ENCODE measurements at regions of chr17 and their contacts with region 1.

Region 1: DNA sequence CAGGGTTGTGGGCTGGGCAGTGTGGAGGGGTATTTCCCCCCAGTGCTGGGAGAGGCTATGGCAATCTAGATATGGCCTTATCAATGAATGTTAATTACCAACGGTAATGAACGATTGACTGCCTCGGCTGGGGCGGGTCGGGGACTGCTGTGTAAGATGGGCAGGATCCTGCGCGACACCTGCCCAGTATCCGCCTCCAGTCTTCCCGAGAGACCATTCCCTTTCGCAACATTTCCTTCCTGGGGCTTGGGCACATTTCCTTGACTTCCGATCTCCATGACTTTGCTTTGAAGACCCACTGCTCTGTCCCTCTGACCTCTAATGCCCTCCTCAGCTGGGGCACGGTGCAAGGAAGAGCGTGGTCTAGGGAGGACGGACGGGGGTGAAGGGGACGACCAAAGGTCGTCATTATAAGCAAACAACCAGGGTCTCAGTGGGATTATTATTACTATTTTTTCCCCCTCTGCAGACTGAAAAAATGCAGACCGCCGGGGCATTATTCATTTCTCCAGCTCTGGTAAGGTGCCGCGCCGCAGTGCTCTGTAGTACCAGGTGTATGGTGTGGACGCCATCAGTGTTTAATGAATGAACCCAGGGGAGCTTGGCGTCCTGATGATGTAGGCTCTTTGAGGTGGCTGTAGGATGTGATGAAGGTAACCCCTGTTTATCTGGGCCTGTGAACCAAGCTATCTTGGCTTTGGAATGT is 506 bp downstream of the ATP5MC1 start:
- DNase-seq: no peak
- ATAC-seq: no peak
- H3K4me3 Mint-ChIP-seq: peak overlapping the region; percentile 88
- H3K27ac Mint-ChIP-seq: peak overlapping the region; percentile 94
- H3K4me1 Mint-ChIP-seq: peaks cover 43% of the 10 kb centered on the region
- H3K27me3 Mint-ChIP-seq: no peaks in the 10 kb centered on the region

Region 2: GRCh38 chr17:48843172-48843900 is 49.8 kb before region 1 on chr17:
- CTCF ChIA-PET with region 1: no interaction called
- DNase-seq: no peak
- ATAC-seq: no peak
- H3K4me3 Mint-ChIP-seq: no peak overlapping the region
- H3K27ac Mint-ChIP-seq: peak overlapping the region; percentile 41
- H3K4me1 Mint-ChIP-seq: peaks cover 44% of the 10 kb centered on the region
- H3K27me3 Mint-ChIP-seq: no peaks in the 10 kb centered on the region

Region 3: GRCh38 chr17:48908047-48908843 is 15.2 kb after region 1 on chr17 and contains the start of gene UBE2Z:
- CTCF ChIA-PET with region 1: interaction called, 16 read pairs
- DNase-seq: peak; percentile 93
- ATAC-seq: peak; percentile 84
- H3K4me3 Mint-ChIP-seq: peak within 1 kb of the TSS; percentile 95
- H3K27ac Mint-ChIP-seq: peak within 1 kb of the TSS; percentile 95
- H3K4me1 Mint-ChIP-seq: peaks cover 47% of the 10 kb centered on the region
- H3K27me3 Mint-ChIP-seq: no peaks in the 10 kb centered on the region
- total RNA-seq, gene UBE2Z: 73.7 to 90.6 TPM

Measured in activated CD8-positive, alpha-beta memory T cell treated with anti-CD3 and anti-CD28 coated beads, Interleukin-2, amount 10 ng/mL, durations not matched to agents 7 days and 5 days (primary cell).